Caco-2 (cell line): ENCODE measurements at regions of chr14 and their contacts with region 1.

Region 1: GRCh38 chr14:53325176-53325806 is 172.2 kb upstream of the DDHD1 start:
- DNase-seq: no peak
- H3K4me3 ChIP-seq: no peak overlapping the region
- H3K4me3 Mint-ChIP-seq: no peak overlapping the region
- H3K27ac Mint-ChIP-seq: no peak overlapping the region
- H3K4me1 ChIP-seq: no peaks in the 10 kb centered on the region
- H3K4me1 Mint-ChIP-seq: no peaks in the 10 kb centered on the region
- H3K27me3 ChIP-seq: no peaks in the 10 kb centered on the region
- H3K27me3 Mint-ChIP-seq: peaks cover 14% of the 10 kb centered on the region
- CTCF ChIP-seq: peak in 1 of 2 experiments; percentile 21

Region 2: DNA sequence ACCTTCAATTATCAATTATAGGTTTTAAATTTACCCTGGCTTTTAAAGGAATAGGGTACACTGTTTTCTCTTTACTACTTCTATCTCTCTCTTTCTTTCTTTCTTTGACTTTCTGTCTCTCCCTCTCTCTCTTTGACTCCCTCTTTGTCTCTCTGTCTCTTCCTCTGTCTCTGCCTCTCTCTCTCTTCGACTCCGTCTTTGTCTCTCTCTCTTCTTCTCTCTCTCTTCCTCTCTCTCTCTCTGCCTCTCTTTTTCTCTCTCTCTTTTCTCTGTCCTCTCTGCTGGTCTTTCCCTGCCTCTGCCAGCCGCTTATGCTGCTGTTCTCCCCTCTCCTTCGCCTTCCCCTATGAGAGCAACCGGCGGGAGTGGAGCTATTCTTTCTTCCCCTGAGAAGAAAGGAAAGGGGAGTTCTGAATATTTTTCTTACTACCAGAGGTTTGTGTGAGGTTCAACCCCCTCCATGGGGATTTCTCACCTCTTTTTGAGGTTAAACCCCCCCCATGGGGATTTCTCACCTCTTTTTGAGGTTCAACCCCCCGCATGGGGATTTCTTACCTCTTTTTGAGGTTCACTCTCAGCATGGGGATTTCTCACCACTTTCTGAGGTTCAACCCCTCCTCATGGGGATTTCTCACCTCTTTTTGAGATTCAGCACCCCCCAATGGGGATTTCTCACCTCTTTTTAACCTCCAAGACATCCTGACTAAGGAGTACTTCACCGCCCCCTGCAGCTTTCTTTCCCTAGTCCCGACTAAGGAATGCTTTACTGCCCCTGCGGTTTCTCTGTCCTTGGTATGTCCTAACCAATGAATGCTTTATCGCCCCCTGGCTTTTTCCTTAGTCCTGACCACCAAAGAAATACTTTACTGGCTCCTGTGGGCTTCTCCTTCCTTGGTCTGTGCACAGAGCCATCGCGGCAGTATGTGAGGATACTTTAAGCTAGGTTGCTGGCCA is 144.7 kb before region 1 on chr14:
- CTCF ChIA-PET with region 1: no interaction called
- POLR2A ChIA-PET with region 1: no interaction called
- intact Hi-C with region 1: no loop called
- DNase-seq: peak; percentile 39
- H3K4me3 ChIP-seq: no peak overlapping the region
- H3K4me3 Mint-ChIP-seq: no peak overlapping the region
- H3K27ac Mint-ChIP-seq: no peak overlapping the region
- H3K4me1 ChIP-seq: no peaks in the 10 kb centered on the region
- H3K4me1 Mint-ChIP-seq: no peaks in the 10 kb centered on the region
- H3K27me3 ChIP-seq: no peaks in the 10 kb centered on the region; the same call in 1 of the 2 replicates
- H3K27me3 Mint-ChIP-seq: peaks cover 16% of the 10 kb centered on the region
- CTCF ChIP-seq: peak; percentile 23 to 31

Region 3: DNA sequence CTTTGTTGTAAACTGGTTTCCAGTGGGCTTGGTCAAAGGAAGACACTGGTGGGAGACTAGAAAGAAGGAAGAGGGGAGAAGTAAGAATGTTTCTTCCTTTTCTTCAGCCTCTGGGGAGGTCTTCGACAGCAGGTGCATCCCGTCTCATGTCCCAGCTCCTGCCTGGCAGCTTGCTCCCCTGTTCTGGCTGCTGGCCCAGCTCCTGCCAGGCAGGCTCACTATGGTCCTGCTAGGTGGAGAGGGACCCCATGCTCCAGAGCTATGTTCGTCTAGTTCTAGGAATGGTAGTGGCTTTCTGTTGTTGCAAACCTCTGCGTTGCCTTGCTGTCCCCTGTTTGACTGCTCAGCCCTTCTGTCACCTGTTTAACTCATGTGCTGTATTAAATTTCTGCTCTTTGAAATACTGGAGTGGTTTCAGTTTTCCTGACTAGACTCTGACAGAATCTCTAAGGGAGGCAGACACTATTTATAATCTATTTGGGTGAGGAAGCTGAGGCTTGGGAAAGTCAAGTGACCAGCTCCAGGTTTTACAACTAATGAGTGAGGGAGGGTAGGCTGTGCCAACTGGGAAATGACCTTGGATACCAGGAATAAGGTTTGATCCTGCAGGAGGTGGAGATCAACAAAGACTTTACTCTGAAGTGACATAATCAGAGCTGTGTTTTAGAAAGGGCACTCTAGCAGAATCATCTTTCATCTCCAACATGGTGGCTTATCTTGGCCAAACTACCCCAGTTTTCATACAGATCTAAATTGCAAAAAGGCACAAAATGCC is 77.5 kb before region 1 on chr14:
- CTCF ChIA-PET with region 1: no interaction called
- POLR2A ChIA-PET with region 1: no interaction called
- intact Hi-C with region 1: no loop called
- DNase-seq: no peak
- H3K4me3 ChIP-seq: no peak overlapping the region
- H3K4me3 Mint-ChIP-seq: no peak overlapping the region
- H3K27ac Mint-ChIP-seq: no peak overlapping the region
- H3K4me1 ChIP-seq: no peaks in the 10 kb centered on the region
- H3K4me1 Mint-ChIP-seq: no peaks in the 10 kb centered on the region
- H3K27me3 ChIP-seq: no peaks in the 10 kb centered on the region
- H3K27me3 Mint-ChIP-seq: peaks cover 14% of the 10 kb centered on the region
- CTCF ChIP-seq: no peak

Region 4: GRCh38 chr14:53295985-53296582 is 29.2 kb before region 1 on chr14:
- CTCF ChIA-PET with region 1: interaction called, 4 read pairs
- POLR2A ChIA-PET with region 1: no interaction called
- intact Hi-C with region 1: loop called (anchors 2 kb)
- DNase-seq: peak in 1 of 2 experiments; percentile 53
- H3K4me3 ChIP-seq: no peak overlapping the region
- H3K4me3 Mint-ChIP-seq: no peak overlapping the region
- H3K27ac Mint-ChIP-seq: no peak overlapping the region
- H3K4me1 ChIP-seq: no peaks in the 10 kb centered on the region
- H3K4me1 Mint-ChIP-seq: no peaks in the 10 kb centered on the region
- H3K27me3 ChIP-seq: no peaks in the 10 kb centered on the region
- H3K27me3 Mint-ChIP-seq: peaks cover 5% of the 10 kb centered on the region
- CTCF ChIP-seq: peak; percentile 49 to 65

Region 5: GRCh38 chr14:54048311-54048710 is 723.0 kb after region 1 on chr14:
- CTCF ChIA-PET with region 1: interaction called, 11 read pairs
- POLR2A ChIA-PET with region 1: no interaction called
- intact Hi-C with region 1: no loop called
- DNase-seq: no peak
- H3K4me3 ChIP-seq: no peak overlapping the region
- H3K4me3 Mint-ChIP-seq: no peak overlapping the region
- H3K27ac Mint-ChIP-seq: no peak overlapping the region
- H3K4me1 ChIP-seq: peaks cover 22% of the 10 kb centered on the region
- H3K4me1 Mint-ChIP-seq: peaks cover 29% of the 10 kb centered on the region
- H3K27me3 ChIP-seq: no peaks in the 10 kb centered on the region
- H3K27me3 Mint-ChIP-seq: no peaks in the 10 kb centered on the region
- CTCF ChIP-seq: no peak